SK-N-SH (cell line): ENCODE measurements at regions of chr9 and their contacts with region 1.

Region 1: GRCh38 chr9:33623658-33624586 is 99.9 kb downstream of the ANKRD18B start:
- DNase-seq: peak; percentile 83
- H3K4me3 ChIP-seq: no peak overlapping the region
- H3K27ac ChIP-seq: no peak overlapping the region
- H3K4me1 ChIP-seq: peaks cover 5 to 12% of the 10 kb centered on the region in 2 experiments; a peak in 2 of 4 replicates
- H3K27me3 ChIP-seq: no peaks in the 10 kb centered on the region; the same call in 1 of the 2 replicates
- CTCF ChIP-seq: peak; percentile 80
- EP300 ChIP-seq: no peak
- RAD21 ChIP-seq: peak; percentile 94

Region 2: GRCh38 chr9:33130508-33130911 is 493.4 kb before region 1 on chr9:
- CTCF ChIA-PET with region 1: no interaction called
- POLR2A ChIA-PET with region 1: no interaction called
- DNase-seq: no peak
- H3K4me3 ChIP-seq: no peak overlapping the region
- H3K27ac ChIP-seq: no peak overlapping the region
- H3K4me1 ChIP-seq: no peaks in the 10 kb centered on the region; a peak in 2 of 4 replicates
- H3K27me3 ChIP-seq: no peaks in the 10 kb centered on the region
- CTCF ChIP-seq: no peak
- EP300 ChIP-seq: no peak
- RAD21 ChIP-seq: no peak

Region 3: DNA sequence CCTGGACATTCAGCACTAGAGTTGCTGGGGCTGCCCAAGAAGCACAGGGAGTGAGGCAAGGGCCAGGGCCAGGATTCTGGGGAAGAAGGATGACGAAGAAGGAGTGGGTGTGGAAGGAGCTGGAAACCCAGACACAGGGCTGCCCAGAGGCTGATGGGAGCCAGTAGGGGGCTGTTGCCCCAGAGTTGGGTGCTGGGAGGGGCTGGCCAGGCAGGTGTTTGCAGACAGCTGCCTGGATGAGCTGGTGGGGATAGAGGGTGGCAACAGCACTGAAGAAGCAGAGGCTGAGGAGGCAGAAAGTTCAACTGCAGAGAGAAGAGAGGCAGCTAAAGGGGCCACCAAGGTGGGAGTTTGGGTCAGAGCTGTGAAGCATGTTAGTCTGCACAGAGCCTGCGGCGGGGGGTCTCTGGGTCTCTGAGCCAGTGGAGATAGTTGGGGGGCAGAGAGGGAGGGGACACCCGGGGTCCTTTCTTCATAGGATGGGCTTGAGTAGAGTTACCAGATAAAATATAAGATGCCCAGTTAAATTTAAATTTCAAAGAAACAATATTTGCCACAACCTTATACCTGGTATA is 219.0 kb before region 1 on chr9:
- CTCF ChIA-PET with region 1: interaction called, 15 read pairs
- POLR2A ChIA-PET with region 1: no interaction called
- DNase-seq: no peak
- H3K4me3 ChIP-seq: no peak overlapping the region
- H3K27ac ChIP-seq: no peak overlapping the region
- H3K4me1 ChIP-seq: no peaks in the 10 kb centered on the region
- H3K27me3 ChIP-seq: no peaks in the 10 kb centered on the region
- CTCF ChIP-seq: no peak
- EP300 ChIP-seq: no peak
- RAD21 ChIP-seq: no peak

Region 4: GRCh38 chr9:33649463-33649862 is 25.5 kb after region 1 on chr9:
- CTCF ChIA-PET with region 1: interaction called, 23 read pairs
- POLR2A ChIA-PET with region 1: no interaction called
- DNase-seq: no peak
- H3K4me3 ChIP-seq: no peak overlapping the region
- H3K27ac ChIP-seq: no peak overlapping the region
- H3K4me1 ChIP-seq: no peaks in the 10 kb centered on the region
- H3K27me3 ChIP-seq: peaks cover 24% of the 10 kb centered on the region; the same call in 1 of the 2 replicates
- CTCF ChIP-seq: no peak
- EP300 ChIP-seq: no peak
- RAD21 ChIP-seq: no peak

Region 5: DNA sequence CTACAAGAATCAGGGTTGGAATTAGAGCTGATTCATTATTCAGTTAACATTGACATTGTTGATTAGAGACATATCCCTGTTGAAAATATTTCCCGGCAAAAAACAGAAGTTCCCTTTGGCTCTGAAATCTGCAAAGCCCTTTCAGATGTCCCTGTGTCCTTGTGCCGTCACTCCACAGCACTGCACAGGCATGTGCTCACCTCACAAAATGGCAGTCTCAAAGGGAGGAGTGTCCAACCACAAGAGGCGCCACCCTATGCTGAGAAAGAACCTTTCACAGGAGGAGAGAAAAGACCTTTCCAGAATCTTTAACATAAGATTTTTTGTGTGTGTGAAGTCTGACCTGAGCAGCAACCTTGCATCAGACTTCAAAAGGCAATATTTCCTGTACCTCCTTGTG is 58.6 kb after region 1 on chr9:
- CTCF ChIA-PET with region 1: interaction called, 13 read pairs
- POLR2A ChIA-PET with region 1: no interaction called
- DNase-seq: no peak
- H3K4me3 ChIP-seq: no peak overlapping the region
- H3K27ac ChIP-seq: no peak overlapping the region
- H3K4me1 ChIP-seq: no peaks in the 10 kb centered on the region; a peak in 2 of 4 replicates
- H3K27me3 ChIP-seq: no peaks in the 10 kb centered on the region
- CTCF ChIP-seq: no peak
- EP300 ChIP-seq: no peak
- RAD21 ChIP-seq: no peak

Region 6: DNA sequence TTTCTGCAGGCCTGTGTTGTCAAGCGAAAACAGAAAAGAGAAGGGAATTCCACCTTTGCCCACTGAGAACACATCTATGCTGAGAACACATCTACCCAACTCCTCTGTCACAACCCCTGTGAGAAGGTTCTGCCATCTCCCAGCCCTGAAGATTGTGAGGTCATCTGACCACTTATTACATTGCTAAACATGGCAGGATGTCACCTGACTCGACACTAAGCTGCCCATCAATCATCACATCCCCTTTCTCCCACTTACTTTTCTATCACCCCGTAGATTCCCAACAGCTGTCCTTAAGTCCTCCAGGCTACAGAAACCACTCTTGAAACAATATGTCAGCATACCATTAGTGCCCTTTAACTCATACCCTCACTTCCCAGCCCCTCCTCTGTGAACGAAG is 107.2 kb after region 1 on chr9:
- CTCF ChIA-PET with region 1: interaction called, 496 read pairs
- POLR2A ChIA-PET with region 1: no interaction called
- DNase-seq: no peak
- H3K4me3 ChIP-seq: no peak overlapping the region
- H3K27ac ChIP-seq: no peak overlapping the region
- H3K4me1 ChIP-seq: peaks cover 0 to 5% of the 10 kb centered on the region in 2 experiments; a peak in 1 of 4 replicates
- H3K27me3 ChIP-seq: no peaks in the 10 kb centered on the region
- CTCF ChIP-seq: no peak
- EP300 ChIP-seq: no peak
- RAD21 ChIP-seq: no peak

Region 7: DNA sequence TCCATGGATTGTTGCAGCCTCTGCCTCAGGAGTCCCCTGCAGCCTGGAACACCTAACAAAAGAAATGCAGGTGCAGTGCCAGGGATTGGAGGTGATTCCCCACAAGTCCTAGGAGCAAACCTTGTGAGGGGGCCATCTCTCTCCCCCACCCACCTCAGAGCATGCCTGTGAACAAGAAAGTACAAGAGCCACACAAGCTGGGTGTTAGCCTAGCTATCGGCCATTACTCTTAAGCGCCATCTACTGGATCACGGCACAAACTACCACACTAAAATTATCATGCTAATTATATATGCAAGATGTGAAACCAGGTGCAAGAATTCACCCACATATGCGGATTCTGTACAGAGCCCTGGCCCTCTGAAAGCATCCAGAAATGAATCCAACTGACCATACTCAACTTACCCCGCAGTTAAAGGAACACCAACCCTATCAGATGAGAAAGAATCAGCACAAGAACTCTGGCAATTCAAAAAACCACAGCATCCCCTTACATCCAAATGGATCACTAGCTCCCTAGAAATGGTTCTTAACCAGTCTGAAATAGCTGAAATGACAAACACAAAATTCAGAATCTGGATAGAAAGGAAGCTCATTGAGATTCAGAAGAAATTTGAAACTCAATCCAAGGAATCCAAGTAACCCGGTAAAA is 154.9 kb after region 1 on chr9:
- CTCF ChIA-PET with region 1: interaction called, 13 read pairs
- POLR2A ChIA-PET with region 1: no interaction called
- DNase-seq: peak; percentile 70
- H3K4me3 ChIP-seq: no peak overlapping the region
- H3K27ac ChIP-seq: no peak overlapping the region
- H3K4me1 ChIP-seq: peaks cover 3 to 7% of the 10 kb centered on the region in 2 experiments; a peak in 3 of 4 replicates
- H3K27me3 ChIP-seq: no peaks in the 10 kb centered on the region
- CTCF ChIP-seq: peak; percentile 78
- EP300 ChIP-seq: no peak
- RAD21 ChIP-seq: peak; percentile 77

Region 8: DNA sequence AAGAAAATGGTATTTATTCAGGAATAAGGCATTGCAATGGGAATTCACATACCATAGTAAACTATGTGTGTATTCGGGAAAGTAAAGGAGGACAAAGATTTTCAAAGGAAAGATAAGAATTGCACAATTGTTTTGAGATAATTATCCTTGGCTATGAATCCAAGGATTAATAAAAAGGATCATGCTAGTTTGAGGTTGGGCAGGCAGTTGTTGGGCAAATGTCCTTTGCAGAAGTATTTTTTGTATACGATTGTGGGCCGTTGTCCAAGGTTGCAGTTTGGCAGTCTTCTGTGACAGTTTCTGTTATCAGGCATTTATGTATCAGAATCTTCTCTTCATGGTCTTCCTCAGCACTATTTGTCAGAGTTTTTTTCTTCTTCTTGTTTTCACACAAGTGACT is 435.4 kb after region 1 on chr9:
- CTCF ChIA-PET with region 1: no interaction called
- POLR2A ChIA-PET with region 1: no interaction called
- DNase-seq: no peak
- H3K4me3 ChIP-seq: no peak overlapping the region
- H3K27ac ChIP-seq: no peak overlapping the region
- H3K4me1 ChIP-seq: no peaks in the 10 kb centered on the region
- H3K27me3 ChIP-seq: no peaks in the 10 kb centered on the region
- CTCF ChIP-seq: no peak
- EP300 ChIP-seq: no peak
- RAD21 ChIP-seq: no peak